Activated B cell treated with CpG ODN at 0.5 μM for 24 hours (primary cell): ENCODE measurements at regions of chr4 and their contacts with region 1.

Region 1: DNA sequence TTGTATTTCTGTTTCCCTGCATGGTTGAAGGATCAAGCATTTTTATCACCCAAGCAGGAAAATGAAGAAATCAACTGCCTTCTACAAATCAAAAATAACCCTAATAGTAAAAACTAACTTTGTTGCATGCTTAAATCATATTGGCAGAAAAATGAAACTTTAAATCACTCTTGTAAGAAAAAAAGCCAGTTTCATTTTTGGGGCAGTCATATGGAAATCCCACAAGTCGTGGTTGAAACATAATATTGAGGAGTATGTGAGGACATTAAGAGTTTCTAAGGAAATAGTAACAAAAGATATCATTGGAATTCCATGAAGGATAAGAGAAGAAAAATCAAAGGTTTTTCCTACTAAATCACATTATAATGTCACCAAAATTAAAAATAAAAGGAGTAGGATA is 8.4 kb downstream of the TEC start:
- DNase-seq: no peak
- ATAC-seq: no peak
- H3K4me3 Mint-ChIP-seq: peak overlapping the region; percentile 56
- H3K27ac Mint-ChIP-seq: peak overlapping the region; percentile 47
- H3K4me1 Mint-ChIP-seq: peaks cover 42% of the 10 kb centered on the region
- H3K27me3 Mint-ChIP-seq: no peaks in the 10 kb centered on the region
- CTCF ChIP-seq: no peak

Region 2: GRCh38 chr4:48234575-48234974 is 26.7 kb before region 1 on chr4:
- CTCF ChIA-PET with region 1: no interaction called
- POLR2A ChIA-PET with region 1: no interaction called
- intact Hi-C with region 1: loop called (anchors 2 kb)
- DNase-seq: no peak
- ATAC-seq: no peak
- H3K4me3 Mint-ChIP-seq: no peak overlapping the region
- H3K27ac Mint-ChIP-seq: no peak overlapping the region
- H3K4me1 Mint-ChIP-seq: peaks cover 19% of the 10 kb centered on the region
- H3K27me3 Mint-ChIP-seq: no peaks in the 10 kb centered on the region
- CTCF ChIP-seq: no peak

Region 3: GRCh38 chr4:48360285-48361010 is 99.2 kb after region 1 on chr4:
- CTCF ChIA-PET with region 1: no interaction called
- POLR2A ChIA-PET with region 1: no interaction called
- intact Hi-C with region 1: no loop called
- DNase-seq: no peak
- ATAC-seq: no peak
- H3K4me3 Mint-ChIP-seq: no peak overlapping the region
- H3K27ac Mint-ChIP-seq: no peak overlapping the region
- H3K4me1 Mint-ChIP-seq: peaks cover 14% of the 10 kb centered on the region
- H3K27me3 Mint-ChIP-seq: no peaks in the 10 kb centered on the region
- CTCF ChIP-seq: no peak